A549 (cell line): ENCODE measurements at regions of chr19 and their contacts with region 1.

Region 1: DNA sequence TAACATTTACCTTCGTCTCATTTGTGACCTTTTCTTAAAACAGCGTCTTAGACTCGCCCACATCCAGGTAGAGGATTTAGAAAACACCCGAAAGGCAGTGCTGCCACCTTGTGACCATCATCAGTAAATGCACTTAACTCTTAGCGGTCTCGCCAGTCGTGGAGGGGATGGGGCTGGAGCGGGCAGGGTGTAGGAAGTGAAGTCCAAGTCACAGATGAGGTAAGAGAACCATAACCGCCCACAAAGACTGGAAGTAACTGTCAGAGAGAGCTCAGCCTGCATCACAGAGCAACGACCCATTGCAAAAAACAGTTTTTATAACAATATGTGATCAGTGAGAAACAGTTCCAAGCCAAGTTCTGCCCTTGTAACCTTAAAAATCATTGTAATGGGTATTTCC is 10.7 kb upstream of the CEACAM3 start:
- DNase-seq: peak; percentile 93 to 99
- ATAC-seq: peak; percentile 74 to 92
- H3K4me3 ChIP-seq: no peak overlapping the region
- H3K27ac ChIP-seq: no peak overlapping the region
- H3K4me1 ChIP-seq: peaks cover 5% of the 10 kb centered on the region; the same call in 1 of the 3 replicates
- CTCF ChIP-seq: peak; percentile 99
- EP300 ChIP-seq: no peak
- POLR2A ChIP-seq: no peak
- RAD21 ChIP-seq: peak; percentile 80 to 88

Region 2: GRCh38 chr19:41588497-41589209 is 197.0 kb before region 1 on chr19:
- CTCF ChIA-PET with region 1: no interaction called
- POLR2A ChIA-PET with region 1: no interaction called
- DNase-seq: peak; percentile 44 to 58
- ATAC-seq: peak; percentile 61 to 72; a peak in 5 of 6 replicates
- H3K4me3 ChIP-seq: no peak overlapping the region
- H3K27ac ChIP-seq: no peak overlapping the region
- H3K4me1 ChIP-seq: no peaks in the 10 kb centered on the region
- CTCF ChIP-seq: no peak
- EP300 ChIP-seq: no peak
- POLR2A ChIP-seq: no peak
- RAD21 ChIP-seq: no peak

Region 3: GRCh38 chr19:41657157-41657556 is 128.5 kb before region 1 on chr19:
- CTCF ChIA-PET with region 1: interaction called, 10 read pairs
- POLR2A ChIA-PET with region 1: no interaction called
- DNase-seq: no peak
- ATAC-seq: no peak
- H3K4me3 ChIP-seq: no peak overlapping the region
- H3K27ac ChIP-seq: no peak overlapping the region
- H3K4me1 ChIP-seq: no peaks in the 10 kb centered on the region
- CTCF ChIP-seq: no peak
- EP300 ChIP-seq: no peak
- POLR2A ChIP-seq: no peak
- RAD21 ChIP-seq: no peak

Region 4: DNA sequence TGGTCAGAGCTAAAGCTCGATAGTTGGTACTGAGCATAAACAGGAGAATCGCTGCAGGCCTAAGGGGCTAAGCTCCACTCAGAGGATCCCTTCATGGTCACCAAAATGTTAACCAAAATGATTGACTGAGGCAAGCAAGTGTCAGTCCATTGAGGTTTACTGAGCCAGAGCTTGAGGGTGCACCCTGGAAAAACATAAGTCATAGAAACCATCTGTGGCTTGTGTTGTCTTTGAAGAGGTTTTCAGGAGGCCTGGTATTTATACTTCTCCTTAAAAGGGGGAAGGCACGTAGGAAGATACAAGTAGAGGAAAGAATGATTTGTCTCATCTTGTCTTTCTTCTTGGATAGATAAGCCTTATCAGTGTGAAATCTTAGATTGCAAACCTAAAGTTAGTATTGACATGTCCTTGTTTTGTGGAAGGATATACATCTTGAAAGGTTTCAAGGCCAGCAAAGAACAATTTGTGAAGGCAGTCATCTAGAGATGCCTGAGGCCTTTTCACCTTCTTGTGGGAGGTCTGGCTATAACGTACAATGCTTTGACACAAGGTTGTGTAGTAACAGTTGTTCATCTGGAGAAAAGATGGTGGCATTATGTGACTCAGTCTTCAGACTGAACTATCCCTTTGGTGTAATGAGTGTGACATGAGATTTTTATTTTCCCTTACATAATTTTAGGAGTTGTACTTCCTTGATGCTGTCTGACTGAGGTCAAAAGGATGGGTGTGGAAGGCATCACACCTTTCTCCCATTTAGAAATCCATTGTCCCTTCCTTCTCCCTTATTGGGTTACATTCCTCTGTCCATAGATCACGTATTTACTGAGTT is 45.0 kb before region 1 on chr19:
- CTCF ChIA-PET with region 1: interaction called, 12 read pairs
- POLR2A ChIA-PET with region 1: no interaction called
- DNase-seq: no peak
- ATAC-seq: no peak
- H3K4me3 ChIP-seq: no peak overlapping the region
- H3K27ac ChIP-seq: no peak overlapping the region
- H3K4me1 ChIP-seq: no peaks in the 10 kb centered on the region
- CTCF ChIP-seq: no peak
- EP300 ChIP-seq: no peak
- POLR2A ChIP-seq: no peak
- RAD21 ChIP-seq: no peak

Region 5: GRCh38 chr19:41801792-41802211 is 16.1 kb after region 1 on chr19:
- CTCF ChIA-PET with region 1: interaction called, 277 read pairs
- POLR2A ChIA-PET with region 1: no interaction called
- DNase-seq: no peak
- ATAC-seq: no peak
- H3K4me3 ChIP-seq: no peak overlapping the region
- H3K27ac ChIP-seq: no peak overlapping the region
- H3K4me1 ChIP-seq: 0 out of 3 replicates have a peak, but pooled peaks cover 5% of the 10 kb centered on the region
- CTCF ChIP-seq: no peak
- EP300 ChIP-seq: no peak
- POLR2A ChIP-seq: no peak
- RAD21 ChIP-seq: no peak

Region 6: GRCh38 chr19:41837981-41838708 is 52.5 kb after region 1 on chr19:
- CTCF ChIA-PET with region 1: interaction called, 157 read pairs
- POLR2A ChIA-PET with region 1: no interaction called
- DNase-seq: no peak
- ATAC-seq: peak; percentile 7 to 20; a peak in 4 of 6 replicates
- H3K4me3 ChIP-seq: no peak overlapping the region
- H3K27ac ChIP-seq: no peak overlapping the region
- H3K4me1 ChIP-seq: no peaks in the 10 kb centered on the region
- CTCF ChIP-seq: no peak
- EP300 ChIP-seq: no peak
- POLR2A ChIP-seq: no peak
- RAD21 ChIP-seq: no peak

Region 7: DNA sequence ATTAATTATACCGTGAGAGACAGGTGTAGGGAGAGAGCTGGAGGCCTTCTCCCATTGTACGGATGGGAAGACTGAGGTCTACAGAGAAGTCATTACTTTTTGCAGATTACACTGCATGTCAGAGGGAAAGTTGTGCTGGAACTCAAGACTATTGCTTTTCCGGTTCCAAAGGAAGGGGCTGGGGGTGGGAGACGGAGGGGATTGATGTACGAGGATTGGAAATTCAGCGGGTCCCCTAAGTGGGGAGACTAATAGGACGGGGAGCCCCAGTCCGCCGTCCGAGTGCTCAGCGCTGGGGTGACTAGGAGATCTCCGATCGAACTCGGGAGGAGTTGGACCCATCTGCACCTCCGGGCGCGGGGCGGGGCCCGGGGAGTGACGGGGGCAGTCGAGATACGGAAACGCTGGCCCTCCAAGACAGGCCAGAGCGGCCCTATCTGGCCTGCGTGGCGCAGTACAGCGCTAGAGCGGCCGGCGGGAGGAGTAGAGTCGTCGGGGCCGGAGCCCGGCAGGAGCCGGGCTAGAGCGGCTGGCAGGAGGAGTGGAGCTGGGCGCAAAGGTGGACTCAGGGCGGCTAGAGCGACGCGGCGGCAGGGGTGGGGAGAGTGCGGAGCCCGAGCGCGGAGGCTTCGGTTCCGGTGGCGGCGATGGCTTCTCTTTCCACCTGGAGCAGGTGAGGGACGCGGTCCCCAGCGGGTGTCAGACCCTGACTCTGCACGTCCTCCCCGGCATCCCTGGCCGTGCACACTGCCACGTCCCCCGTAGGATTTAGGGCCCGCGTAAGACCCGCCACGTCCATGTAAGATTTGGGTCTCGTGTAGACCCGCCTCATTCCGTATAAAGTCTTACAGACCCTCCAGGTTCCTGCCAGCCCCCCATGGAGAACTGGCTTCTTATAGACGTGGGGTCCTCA is 98.4 kb after region 1 on chr19:
- CTCF ChIA-PET with region 1: no interaction called
- POLR2A ChIA-PET with region 1: no interaction called
- DNase-seq: peak; percentile 100
- ATAC-seq: peak; percentile 78 to 97
- H3K4me3 ChIP-seq: peak overlapping the region; percentile 78
- H3K27ac ChIP-seq: peak overlapping the region; percentile 81 to 87
- H3K4me1 ChIP-seq: peaks cover 15% of the 10 kb centered on the region
- CTCF ChIP-seq: no peak; the same call in 2 of the 3 replicates
- EP300 ChIP-seq: peak in 1 of 2 experiments; percentile 53; a peak in 2 of 5 replicates
- POLR2A ChIP-seq: peak; percentile 73
- RAD21 ChIP-seq: no peak